ENCODE measurements at regions of chr14 and their contacts with region 1.

Region 1: GRCh38 chr14:54241517-54241916 is 155.3 kb upstream of the CDKN3 start:
- DNase-seq: no peak

Region 2: GRCh38 chr14:53793790-53794505 is 447.6 kb before region 1 on chr14:
- intact Hi-C with region 1: loop called in 1 of 2 experiments (anchors 10 kb)
- DNase-seq: no peak

Region 3: GRCh38 chr14:54200726-54201125 is 40.8 kb before region 1 on chr14:
- intact Hi-C with region 1: no loop called
- DNase-seq: no peak

Region 4: GRCh38 chr14:54278087-54278486 is 36.6 kb after region 1 on chr14:
- intact Hi-C with region 1: no loop called
- DNase-seq: no peak

Region 5: GRCh38 chr14:54387328-54387727 is 145.8 kb after region 1 on chr14:
- intact Hi-C with region 1: no loop called
- DNase-seq: no peak

Region 6: GRCh38 chr14:55514819-55515490 is 1273.4 kb after region 1 on chr14:
- intact Hi-C with region 1: no loop called
- DNase-seq: no peak

Measured in posterior vena cava (tissue), 2 donors.